Cardiac septum (tissue), 1 donor: ENCODE measurements at regions of chr5 and their contacts with region 1.

Region 1: DNA sequence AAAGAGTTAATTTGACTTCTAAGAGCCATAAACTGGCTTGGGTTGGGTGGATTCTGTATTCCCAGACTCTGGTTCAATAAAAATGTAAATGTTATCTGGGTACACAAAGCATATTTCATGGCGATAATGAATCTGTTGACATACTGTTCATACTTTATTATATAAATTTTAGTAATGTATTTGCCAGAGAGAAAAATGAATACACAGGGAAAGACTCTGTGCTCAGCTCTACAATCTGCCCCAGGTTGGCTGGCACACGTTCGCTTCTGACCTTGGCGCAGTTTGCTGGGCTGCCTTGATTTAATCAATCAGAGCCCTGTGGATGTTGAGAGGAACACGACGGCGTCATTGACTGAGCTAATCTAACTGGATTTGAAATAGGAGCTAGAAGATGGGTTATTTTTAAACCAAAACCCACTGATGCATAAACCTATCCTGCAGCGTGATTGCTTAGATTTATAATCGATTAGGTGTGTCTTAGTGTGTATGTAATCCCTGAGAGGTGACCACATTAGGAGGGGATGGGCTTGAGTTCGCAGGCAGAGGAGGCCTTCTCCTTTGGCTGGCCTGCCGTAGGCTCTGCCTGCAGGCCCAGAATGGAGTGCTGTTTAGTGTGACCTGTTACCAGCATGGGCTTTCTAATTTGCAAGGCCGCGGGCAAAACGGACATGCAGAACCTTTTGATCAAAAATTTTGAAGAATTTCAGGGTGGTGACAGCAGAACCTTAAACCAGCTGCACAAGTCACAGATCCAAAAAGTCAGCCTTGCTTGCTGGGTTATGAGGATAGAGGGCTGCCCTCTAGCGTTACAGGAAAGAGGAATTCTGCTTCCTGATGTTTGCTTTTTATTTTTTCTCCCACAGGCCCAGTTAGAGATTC is 3.9 kb upstream of the ADCY2 start:
- DNase-seq: no peak

Region 2: GRCh38 chr5:7453947-7454346 is 61.9 kb after region 1 on chr5:
- intact Hi-C with region 1: no loop called
- DNase-seq: no peak

Region 3: GRCh38 chr5:7745882-7746610 is 354.0 kb after region 1 on chr5:
- intact Hi-C with region 1: loop called (anchors 10 kb)
- DNase-seq: no peak